ENCODE measurements at regions of chr11 and their contacts with region 1.

Region 1: DNA sequence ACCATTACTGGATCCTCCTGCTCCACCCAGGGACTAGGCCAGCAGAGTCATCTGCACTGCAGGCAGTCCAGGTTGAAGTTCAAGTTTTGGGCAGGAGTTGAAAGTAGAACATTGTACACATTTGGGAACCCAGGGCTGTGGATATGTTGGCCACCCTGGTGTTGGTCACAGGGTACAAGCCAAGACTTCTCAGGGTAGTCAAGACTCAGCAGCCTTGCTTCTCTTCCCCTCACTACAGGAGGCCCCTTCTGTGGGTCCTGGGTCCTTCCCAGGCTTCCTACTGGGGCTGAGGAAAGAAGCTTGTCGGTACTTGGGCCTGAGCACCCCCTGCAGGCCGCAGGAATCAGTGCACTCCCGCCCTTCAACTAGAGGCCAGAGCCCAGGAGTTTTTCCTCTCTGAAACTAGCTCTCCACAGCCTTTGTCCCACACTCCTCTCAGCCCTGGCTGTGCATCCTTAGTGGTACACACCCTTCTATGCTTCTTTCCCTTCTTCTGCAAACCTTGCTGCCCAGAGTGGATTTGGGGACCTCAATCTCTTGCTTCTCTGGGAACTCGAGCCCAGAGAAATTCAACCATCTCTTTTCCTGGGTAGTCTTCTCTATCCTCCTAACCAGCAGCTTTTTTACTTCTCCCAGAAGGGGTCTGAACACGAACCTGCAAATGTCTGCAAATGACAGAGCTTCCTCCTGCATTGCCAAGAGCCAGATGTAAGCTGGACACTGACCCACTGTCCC is 2.6 kb upstream of the HPX start:
- DNase-seq: peak; percentile 56
- H3K4me3 ChIP-seq: no peak overlapping the region
- H3K27ac ChIP-seq: no peak overlapping the region
- H3K4me1 ChIP-seq: no peaks in the 10 kb centered on the region
- H3K27me3 ChIP-seq: no peaks in the 10 kb centered on the region
- CTCF ChIP-seq: peak; percentile 78 to 93
- POLR2A ChIP-seq: no peak

Region 2: GRCh38 chr11:6389921-6390724 is 53.3 kb before region 1 on chr11 and contains the start of gene SMPD1:
- CTCF ChIA-PET with region 1: interaction called, 638 read pairs
- POLR2A ChIA-PET with region 1: interaction called, 3 read pairs
- dilution Hi-C with region 1: no loop called
- intact Hi-C with region 1: loop called (anchors 2 kb)
- DNase-seq: peak; percentile 90
- H3K4me3 ChIP-seq: peak within 1 kb of the TSS; percentile 71 to 82 (median 72)
- H3K27ac ChIP-seq: peak within 1 kb of the TSS; percentile 73
- H3K4me1 ChIP-seq: peaks cover 33% of the 10 kb centered on the region
- H3K27me3 ChIP-seq: no peaks in the 10 kb centered on the region
- CTCF ChIP-seq: no peak
- POLR2A ChIP-seq: peak; percentile 86
- total RNA-seq, gene SMPD1: 51.9 and 58.9 TPM in 2 replicates

Region 3: GRCh38 chr11:6411594-6412031 is 31.8 kb before region 1 on chr11:
- CTCF ChIA-PET with region 1: interaction called, 27 read pairs
- POLR2A ChIA-PET with region 1: no interaction called
- dilution Hi-C with region 1: no loop called
- intact Hi-C with region 1: no loop called
- DNase-seq: no peak
- H3K4me3 ChIP-seq: no peak overlapping the region
- H3K27ac ChIP-seq: no peak overlapping the region
- H3K4me1 ChIP-seq: no peaks in the 10 kb centered on the region
- H3K27me3 ChIP-seq: no peaks in the 10 kb centered on the region
- CTCF ChIP-seq: no peak
- POLR2A ChIP-seq: no peak

Region 4: GRCh38 chr11:6431861-6432260 is 11.6 kb before region 1 on chr11:
- CTCF ChIA-PET with region 1: interaction called, 46 read pairs
- POLR2A ChIA-PET with region 1: no interaction called
- dilution Hi-C with region 1: no loop called
- intact Hi-C with region 1: no loop called
- DNase-seq: no peak
- H3K4me3 ChIP-seq: no peak overlapping the region
- H3K27ac ChIP-seq: no peak overlapping the region
- H3K4me1 ChIP-seq: no peaks in the 10 kb centered on the region
- H3K27me3 ChIP-seq: no peaks in the 10 kb centered on the region
- CTCF ChIP-seq: no peak
- POLR2A ChIP-seq: no peak

Region 5: GRCh38 chr11:6473481-6474422 is 30.3 kb after region 1 on chr11 and contains the start of gene TRIM3:
- CTCF ChIA-PET with region 1: interaction called, 13 read pairs
- POLR2A ChIA-PET with region 1: no interaction called
- dilution Hi-C with region 1: no loop called
- intact Hi-C with region 1: loop called (anchors 2 kb)
- DNase-seq: peak; percentile 87
- H3K4me3 ChIP-seq: peak within 1 kb of the TSS; percentile 61 to 87 (median 68)
- H3K27ac ChIP-seq: peak within 1 kb of the TSS; percentile 87
- H3K4me1 ChIP-seq: peaks cover 21% of the 10 kb centered on the region
- H3K27me3 ChIP-seq: no peaks in the 10 kb centered on the region
- CTCF ChIP-seq: peak in 1 of 2 donors; percentile 42
- POLR2A ChIP-seq: peak; percentile 95
- total RNA-seq, gene TRIM3: 25.6 and 29.2 TPM in 2 replicates

Region 6: GRCh38 chr11:6505577-6506240 is 62.3 kb after region 1 on chr11:
- CTCF ChIA-PET with region 1: interaction called, 58 read pairs
- POLR2A ChIA-PET with region 1: no interaction called
- dilution Hi-C with region 1: no loop called
- intact Hi-C with region 1: loop called (anchors 1 kb)
- DNase-seq: peak; percentile 67
- H3K4me3 ChIP-seq: no peak overlapping the region
- H3K27ac ChIP-seq: no peak overlapping the region
- H3K4me1 ChIP-seq: no peaks in the 10 kb centered on the region
- H3K27me3 ChIP-seq: no peaks in the 10 kb centered on the region
- CTCF ChIP-seq: peak; percentile 58 to 66
- POLR2A ChIP-seq: no peak

Region 7: DNA sequence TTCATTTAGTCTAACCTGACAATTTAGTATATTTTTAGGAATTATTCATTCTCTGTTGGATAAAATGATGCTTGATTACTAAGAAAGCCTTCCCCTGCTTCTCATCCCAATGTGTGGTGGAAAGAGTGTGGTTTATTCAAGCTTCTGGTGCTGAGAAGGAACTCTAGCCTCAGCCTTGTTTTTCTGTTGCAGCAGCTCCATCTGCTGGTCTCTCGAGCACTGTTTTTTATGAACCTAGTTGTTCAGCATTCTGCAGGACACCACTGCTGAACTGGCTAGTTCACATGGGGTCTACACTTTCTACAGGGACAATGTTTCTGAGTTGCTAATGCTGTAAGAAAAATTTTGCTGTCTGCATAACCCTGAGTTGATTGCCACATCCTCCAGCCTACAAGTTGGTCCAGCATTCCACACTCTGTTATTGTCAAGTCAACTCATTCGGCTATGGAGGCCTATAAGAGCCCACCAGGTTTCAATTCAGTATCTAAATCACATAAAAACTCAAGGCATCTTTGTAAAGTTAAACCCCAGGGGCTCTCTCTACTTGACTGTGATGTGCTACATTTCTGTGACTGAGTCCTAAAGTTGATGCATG is 314.0 kb after region 1 on chr11:
- CTCF ChIA-PET with region 1: interaction called, 16 read pairs
- POLR2A ChIA-PET with region 1: no interaction called
- dilution Hi-C with region 1: no loop called
- intact Hi-C with region 1: loop called (anchors 2 kb)
- DNase-seq: peak; percentile 73
- H3K4me3 ChIP-seq: no peak overlapping the region
- H3K27ac ChIP-seq: no peak overlapping the region
- H3K4me1 ChIP-seq: no peaks in the 10 kb centered on the region
- H3K27me3 ChIP-seq: peaks cover 2 to 8% of the 10 kb centered on the region in 2 experiments
- CTCF ChIP-seq: peak; percentile 58 to 62
- POLR2A ChIP-seq: no peak